Right ventricle myocardium inferior (tissue), 1 donor: ENCODE measurements at regions of chr2 and their contacts with region 1.

Region 1: GRCh38 chr2:233976690-233977294 is 59.6 kb downstream of the TRPM8 start:
- DNase-seq: no peak
- ATAC-seq: no peak

Region 2: GRCh38 chr2:234544659-234545611 is 568.1 kb after region 1 on chr2:
- intact Hi-C with region 1: loop called (anchors 10 kb)
- DNase-seq: no peak
- ATAC-seq: no peak